Adrenal gland (tissue), 19 donors: ENCODE measurements at regions of chr16 and their contacts with region 1.

Region 1: DNA sequence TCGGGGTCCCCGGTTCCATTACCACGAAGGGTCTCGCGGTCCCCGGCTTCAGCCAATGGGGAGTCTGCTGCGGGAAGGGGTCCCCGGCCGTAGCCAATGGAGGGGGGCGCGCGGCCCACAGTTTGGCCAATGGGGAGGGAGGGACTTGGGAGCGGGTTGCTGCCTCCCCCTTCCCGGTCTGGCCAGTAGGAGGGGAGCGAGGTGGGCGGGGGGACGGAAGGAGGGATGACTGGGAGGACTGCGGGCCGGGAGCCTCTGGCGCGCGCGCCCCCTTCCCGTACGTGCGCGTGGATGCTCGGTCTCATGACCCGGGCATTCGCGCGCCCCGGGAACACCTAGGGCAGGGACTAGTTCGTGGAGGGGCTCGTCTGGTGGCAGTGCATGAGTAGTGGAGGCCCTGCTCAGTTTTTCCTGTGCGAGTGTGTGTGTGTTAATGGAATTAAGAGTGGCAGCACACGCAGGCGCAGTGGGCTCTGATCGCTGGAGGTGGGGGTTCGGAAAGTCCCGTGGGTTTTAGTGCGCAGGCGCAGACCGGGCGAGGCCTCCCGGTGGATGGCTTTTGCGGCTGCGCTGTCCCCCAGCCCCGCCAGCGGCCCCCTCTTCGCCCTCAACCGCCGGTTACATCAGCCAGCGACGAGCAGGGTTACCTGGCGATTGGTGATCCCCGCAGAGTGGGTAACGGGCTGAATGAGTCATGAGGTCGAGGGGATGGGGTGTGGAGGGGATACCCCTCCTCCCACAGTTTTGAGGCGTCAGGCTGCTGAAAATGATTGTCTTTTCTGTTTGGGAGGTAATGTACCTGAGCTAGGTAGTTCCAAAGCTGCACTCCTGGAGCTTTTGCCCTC is 1.3 kb downstream of the ATXN2L start:
- DNase-seq: peak; percentile 96 to 99 (median 98)
- H3K4me3 ChIP-seq: peak overlapping the region; percentile 88 to 99 (median 94)
- H3K27ac ChIP-seq: peak overlapping the region; percentile 97 to 99 (median 99)
- H3K4me1 ChIP-seq: peaks cover 16 to 24% of the 10 kb centered on the region in 2 donors
- H3K27me3 ChIP-seq: no peaks in the 10 kb centered on the region
- CTCF ChIP-seq: peak in 5 of 6 experiments; percentile 26 to 48 (median 37)
- POLR2A ChIP-seq: peak; percentile 40 to 87

Region 2: DNA sequence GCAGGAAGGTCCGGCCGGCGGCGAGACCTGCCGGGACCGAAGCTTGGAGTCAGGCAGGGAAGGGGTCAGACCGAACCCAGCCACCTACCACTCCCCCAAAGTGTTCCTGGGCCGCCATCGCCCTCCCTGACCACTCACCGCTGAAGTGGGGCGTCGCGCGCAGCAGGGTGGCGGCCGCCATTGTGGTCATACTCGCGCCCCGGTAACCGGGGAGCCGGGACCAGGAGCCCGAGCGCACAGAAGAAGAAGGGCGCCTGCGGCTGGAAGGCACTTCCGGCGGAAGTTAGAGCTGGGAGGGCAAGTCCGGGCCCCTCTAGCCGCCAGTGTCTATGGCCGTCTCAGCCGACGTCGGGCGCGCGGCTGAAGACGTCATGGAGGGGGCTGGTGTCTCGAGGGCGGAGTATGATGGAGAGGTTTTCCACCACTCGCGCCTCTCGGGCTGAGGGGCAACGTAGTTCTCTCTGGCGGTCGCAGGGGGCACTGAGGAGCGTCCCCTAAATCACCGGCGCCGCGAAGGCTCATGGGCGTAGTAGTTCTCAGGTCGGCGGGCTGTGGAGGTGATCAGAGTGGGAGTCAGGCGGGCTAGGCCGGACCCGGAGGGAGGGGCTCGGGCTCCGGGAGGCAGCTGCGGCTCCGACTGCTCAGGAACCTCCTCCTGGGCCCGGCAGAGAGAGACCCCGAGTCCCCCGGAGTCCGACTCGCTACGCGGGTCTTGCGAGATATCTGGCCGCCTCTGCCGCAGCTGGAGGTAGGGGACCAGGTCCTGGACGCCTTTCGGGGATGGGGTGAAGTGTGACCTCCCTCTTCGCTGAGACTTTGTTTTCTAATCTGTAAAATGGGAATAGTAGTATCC is 22.2 kb after region 1 on chr16 and contains the start of gene TUFM:
- intact Hi-C with region 1: loop called in 1 of 2 experiments (anchors 2 kb)
- DNase-seq: peak; percentile 97 to 99 (median 98)
- H3K4me3 ChIP-seq: peak within 1 kb of the TSS; percentile 43 to 96 (median 95)
- H3K27ac ChIP-seq: peak within 1 kb of the TSS; percentile 52 to 91 (median 86)
- H3K4me1 ChIP-seq: peaks cover 15 to 20% of the 10 kb centered on the region in 2 donors
- H3K27me3 ChIP-seq: no peaks in the 10 kb centered on the region
- CTCF ChIP-seq: peak; percentile 39 to 73 (median 61)
- POLR2A ChIP-seq: peak; percentile 42 to 62
- total RNA-seq, gene TUFM: 144 to 239 (median 208) TPM

Region 3: GRCh38 chr16:28946681-28947080 is 122.6 kb after region 1 on chr16:
- intact Hi-C with region 1: loop called in 1 of 2 experiments (anchors 5 kb)
- DNase-seq: no peak
- H3K4me3 ChIP-seq: no peak overlapping the region
- H3K27ac ChIP-seq: no peak overlapping the region
- H3K4me1 ChIP-seq: peaks cover 5 to 10% of the 10 kb centered on the region in 2 donors
- H3K27me3 ChIP-seq: no peaks in the 10 kb centered on the region
- CTCF ChIP-seq: no peak
- POLR2A ChIP-seq: no peak